ENCODE measurements at regions of chr1 and their contacts with region 1.

Region 1: DNA sequence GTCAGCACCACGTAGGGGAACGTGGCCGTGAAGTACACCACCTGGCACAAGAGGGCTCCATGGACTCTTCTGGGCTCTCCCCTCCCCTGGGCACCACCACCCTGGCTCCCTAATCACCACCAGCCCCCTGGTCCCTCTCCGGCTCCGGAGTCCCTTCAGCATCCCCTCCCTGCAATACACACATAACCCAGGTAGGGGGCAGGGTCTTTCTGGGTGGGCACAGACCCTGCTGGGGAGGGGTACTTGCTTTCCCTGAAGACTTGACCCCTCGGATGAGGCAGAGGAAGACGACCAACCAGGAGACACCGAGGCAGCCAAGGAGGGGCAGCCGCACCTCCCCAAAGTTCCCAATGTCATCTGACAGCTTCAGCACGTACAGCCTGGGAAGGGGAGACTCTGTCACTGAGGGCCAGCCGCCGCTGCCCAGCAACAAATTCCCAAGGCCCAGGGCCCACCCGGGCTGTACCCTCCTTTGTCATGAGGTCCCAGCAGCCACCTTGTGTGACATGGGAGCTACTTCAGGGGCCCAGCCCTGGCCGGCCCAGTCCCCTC is 11.3 kb downstream of the CCDC24 start:
- DNase-seq: no peak
- H3K4me3 ChIP-seq: no peak overlapping the region
- H3K27ac ChIP-seq: no peak overlapping the region
- H3K4me1 ChIP-seq: peaks cover 0 to 6% (median 3%) of the 10 kb centered on the region in 4 donors
- H3K27me3 ChIP-seq: no peaks in the 10 kb centered on the region
- CTCF ChIP-seq: no peak
- EP300 ChIP-seq: no peak
- POLR2A ChIP-seq: no peak

Region 2: GRCh38 chr1:44036409-44037139 is 33.9 kb after region 1 on chr1:
- intact Hi-C with region 1: loop called (anchors 1 kb)
- DNase-seq: peak; percentile 82
- H3K4me3 ChIP-seq: no peak overlapping the region
- H3K27ac ChIP-seq: peak overlapping the region; percentile 64 to 96 (median 70)
- H3K4me1 ChIP-seq: peaks cover 0 to 50% (median 45%) of the 10 kb centered on the region in 4 donors
- H3K27me3 ChIP-seq: no peaks in the 10 kb centered on the region
- CTCF ChIP-seq: peak; percentile 58 to 86 (median 72)
- EP300 ChIP-seq: no peak
- POLR2A ChIP-seq: no peak

Region 3: GRCh38 chr1:44049839-44050238 is 47.2 kb after region 1 on chr1:
- intact Hi-C with region 1: loop called (anchors 1 kb)
- DNase-seq: no peak
- H3K4me3 ChIP-seq: no peak overlapping the region
- H3K27ac ChIP-seq: peak overlapping the region in 2 of 4 donors; percentile 72
- H3K4me1 ChIP-seq: peaks cover 0 to 30% (median 16%) of the 10 kb centered on the region in 4 donors
- H3K27me3 ChIP-seq: no peaks in the 10 kb centered on the region
- CTCF ChIP-seq: no peak
- EP300 ChIP-seq: no peak
- POLR2A ChIP-seq: no peak

Region 4: DNA sequence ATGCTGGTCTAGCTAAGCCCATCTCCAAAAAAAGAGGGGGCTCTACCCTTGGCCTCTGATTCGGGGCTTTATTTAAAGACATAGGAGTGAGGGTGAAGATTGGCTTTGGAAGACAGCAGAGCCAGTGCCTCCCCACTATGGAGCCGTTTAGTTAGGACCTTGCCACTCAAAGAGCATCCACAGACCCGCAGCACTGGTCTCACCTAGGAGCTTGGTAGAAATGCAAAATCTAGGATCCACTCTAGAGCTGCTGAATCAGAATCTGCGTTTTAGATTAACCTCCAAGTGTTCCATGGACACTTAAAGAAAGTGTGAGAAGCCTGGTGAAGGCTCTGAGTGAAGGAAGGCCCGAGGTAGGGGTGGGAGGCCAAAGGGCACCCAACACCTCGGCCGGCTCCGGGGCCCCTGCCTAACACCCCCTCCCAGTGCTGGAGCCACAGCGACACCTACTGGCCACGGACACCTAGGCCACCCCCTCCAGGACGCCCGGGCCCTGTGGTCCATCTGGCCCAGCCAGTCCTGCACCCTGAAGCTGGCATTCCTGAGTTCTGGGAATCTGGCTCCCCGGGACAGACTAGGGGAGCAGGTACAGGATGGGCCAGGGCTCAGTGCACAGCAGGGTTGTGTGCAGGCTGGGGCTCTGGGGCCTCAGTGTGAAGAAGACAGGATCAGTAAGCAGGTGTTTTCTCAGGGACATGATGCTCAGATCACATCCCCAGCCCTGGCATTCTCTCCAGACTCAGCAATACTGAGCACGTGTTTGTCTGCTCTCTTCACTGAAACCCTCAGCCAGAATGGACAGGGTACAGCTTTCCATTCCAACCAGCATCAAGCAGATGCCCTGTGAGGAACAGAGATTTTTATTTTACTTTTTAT is 592.4 kb after region 1 on chr1:
- intact Hi-C with region 1: loop called (anchors 10 kb)
- DNase-seq: peak; percentile 82
- H3K4me3 ChIP-seq: no peak overlapping the region
- H3K27ac ChIP-seq: no peak overlapping the region
- H3K4me1 ChIP-seq: no peaks in the 10 kb centered on the region
- H3K27me3 ChIP-seq: peaks cover 0 to 26% (median 0%) of the 10 kb centered on the region in 3 donors
- CTCF ChIP-seq: peak; percentile 83 to 95 (median 92)
- EP300 ChIP-seq: no peak
- POLR2A ChIP-seq: no peak

Measured in sigmoid colon (tissue), 7 donors.